ENCODE measurements at regions of chr6 and their contacts with region 1.

Region 1: DNA sequence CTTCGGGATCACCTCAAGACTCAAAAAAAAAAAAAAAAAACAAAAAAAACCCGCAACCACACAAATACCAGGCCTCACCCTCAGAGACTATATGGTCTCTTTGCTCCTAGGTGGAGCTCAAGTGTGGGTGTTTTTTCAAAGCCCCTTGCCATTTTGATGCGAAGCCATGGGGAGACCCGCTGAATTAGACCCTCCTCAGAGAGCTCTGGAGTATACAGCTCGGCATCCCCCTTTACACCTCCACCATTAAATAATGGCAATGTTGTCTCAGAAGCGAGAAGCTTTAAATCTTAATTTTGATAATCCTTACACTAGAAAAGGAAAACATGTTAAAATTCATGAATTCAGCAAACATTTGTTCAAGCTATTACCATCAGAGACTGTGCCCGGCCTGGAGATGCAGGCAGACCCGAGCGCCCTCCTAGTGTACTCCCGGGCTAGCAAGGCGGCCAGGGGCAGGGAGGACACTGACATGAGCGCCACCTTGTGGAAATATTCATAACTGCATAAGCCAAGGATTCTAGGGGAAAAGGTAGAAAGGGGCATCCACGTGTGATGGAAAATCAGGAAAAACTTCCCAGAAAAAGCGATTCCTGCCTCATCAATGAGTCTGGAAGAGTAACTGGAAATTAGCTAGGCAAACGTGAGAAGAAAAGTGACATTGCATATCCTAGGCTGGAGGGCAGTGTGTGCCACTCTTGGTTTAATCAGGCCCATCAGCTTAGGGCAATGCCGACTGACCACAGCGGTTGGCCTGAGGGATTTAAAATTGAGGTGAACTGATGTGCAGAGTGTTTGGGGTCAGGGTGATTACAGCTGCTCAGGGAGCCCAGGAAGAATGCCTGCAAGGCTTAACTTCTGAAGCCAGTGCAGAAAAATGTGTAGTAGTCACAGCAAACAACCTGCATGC is 72.5 kb downstream of the B3GAT2 start:
- DNase-seq: peak; percentile 52
- H3K4me3 ChIP-seq: no peak overlapping the region
- H3K27ac ChIP-seq: no peak overlapping the region
- H3K4me1 ChIP-seq: peaks cover 0 to 3% (median 0%) of the 10 kb centered on the region in 4 donors
- H3K27me3 ChIP-seq: no peaks in the 10 kb centered on the region
- CTCF ChIP-seq: peak; percentile 86 to 96 (median 90)
- EP300 ChIP-seq: no peak
- POLR2A ChIP-seq: no peak

Region 2: DNA sequence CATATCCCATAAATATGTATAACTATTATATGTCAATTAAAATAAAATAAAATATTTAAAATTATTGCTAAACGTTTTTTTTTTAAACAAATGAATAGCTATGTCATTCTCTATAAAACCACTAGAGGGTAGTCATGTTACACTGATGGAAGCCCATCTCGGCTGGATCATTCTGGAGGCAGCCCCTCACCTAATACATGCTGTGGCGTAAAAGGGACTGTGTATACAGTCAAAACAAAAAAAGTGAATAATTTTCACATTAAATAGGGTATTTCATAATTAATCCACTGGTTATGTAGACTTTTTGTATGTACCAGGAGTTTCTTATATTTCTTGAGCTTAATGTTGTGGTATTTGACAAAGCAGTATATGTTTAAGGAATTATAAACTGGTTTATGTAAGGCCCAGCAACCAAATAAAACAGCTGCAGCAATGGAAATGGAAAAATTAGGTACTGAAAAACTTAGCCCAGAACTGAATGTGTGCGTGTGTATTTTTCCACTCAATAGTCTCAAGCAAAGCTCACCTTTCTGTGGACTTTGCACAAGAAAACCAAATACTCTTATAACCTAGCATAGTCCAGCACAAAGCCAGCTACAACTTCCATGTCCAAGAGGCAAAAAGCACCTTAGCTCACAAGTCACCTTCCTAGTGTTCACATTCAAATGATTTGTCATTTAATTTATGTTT is 663.2 kb before region 1 on chr6:
- in situ Hi-C with region 1: loop called in 1 of 4 experiments (anchors 25 kb)
- intact Hi-C with region 1: no loop called
- DNase-seq: no peak
- H3K4me3 ChIP-seq: no peak overlapping the region
- H3K27ac ChIP-seq: peak overlapping the region in 2 of 4 donors; percentile 9 to 11
- H3K4me1 ChIP-seq: peaks cover 0 to 18% (median 7%) of the 10 kb centered on the region in 4 donors
- H3K27me3 ChIP-seq: no peaks in the 10 kb centered on the region
- CTCF ChIP-seq: peak; percentile 72 to 84 (median 79)
- EP300 ChIP-seq: no peak
- POLR2A ChIP-seq: no peak

Region 3: DNA sequence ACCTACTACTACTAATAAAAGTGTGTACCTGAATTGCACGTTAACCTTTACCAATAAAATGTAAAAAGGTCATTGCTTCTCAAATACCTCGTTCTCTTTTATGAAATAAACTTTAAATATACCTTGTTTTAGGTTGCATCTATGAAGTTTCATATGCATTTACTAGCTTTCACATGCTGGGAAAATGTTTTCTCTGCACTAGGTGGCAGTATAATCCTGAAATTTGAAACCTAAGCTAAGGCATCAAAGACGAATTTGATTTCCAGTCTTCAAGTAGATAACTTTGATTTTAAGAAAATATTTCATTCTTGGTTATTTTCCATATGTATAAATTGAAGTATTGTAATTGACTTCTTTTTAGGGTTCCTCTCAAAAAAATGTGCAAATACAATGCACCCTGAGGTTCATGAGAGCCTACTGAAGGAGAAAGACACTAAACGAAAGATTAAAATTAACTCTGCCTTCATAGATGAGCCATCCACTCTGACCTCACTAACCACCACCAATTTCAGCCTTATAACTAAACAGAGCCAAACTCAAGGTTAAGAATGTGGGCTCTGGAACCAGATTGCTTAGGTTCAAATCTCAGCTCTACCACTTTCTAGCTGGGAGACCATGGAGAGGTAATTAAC is 574.1 kb before region 1 on chr6:
- in situ Hi-C with region 1: loop called in 2 of 4 experiments (anchors 25 kb)
- intact Hi-C with region 1: no loop called
- DNase-seq: no peak
- H3K4me3 ChIP-seq: no peak overlapping the region
- H3K27ac ChIP-seq: no peak overlapping the region
- H3K4me1 ChIP-seq: peaks cover 0 to 7% (median 0%) of the 10 kb centered on the region in 4 donors
- H3K27me3 ChIP-seq: no peaks in the 10 kb centered on the region
- CTCF ChIP-seq: peak; percentile 47 to 63 (median 58)
- EP300 ChIP-seq: no peak
- POLR2A ChIP-seq: no peak

Region 4: GRCh38 chr6:70547313-70547712 is 337.0 kb before region 1 on chr6:
- in situ Hi-C with region 1: loop called in 2 of 4 experiments (anchors 25 kb)
- intact Hi-C with region 1: no loop called
- DNase-seq: no peak
- H3K4me3 ChIP-seq: no peak overlapping the region
- H3K27ac ChIP-seq: no peak overlapping the region
- H3K4me1 ChIP-seq: no peaks in the 10 kb centered on the region
- H3K27me3 ChIP-seq: no peaks in the 10 kb centered on the region
- CTCF ChIP-seq: peak in 1 of 5 experiments; percentile 13
- EP300 ChIP-seq: no peak
- POLR2A ChIP-seq: no peak

Region 5: DNA sequence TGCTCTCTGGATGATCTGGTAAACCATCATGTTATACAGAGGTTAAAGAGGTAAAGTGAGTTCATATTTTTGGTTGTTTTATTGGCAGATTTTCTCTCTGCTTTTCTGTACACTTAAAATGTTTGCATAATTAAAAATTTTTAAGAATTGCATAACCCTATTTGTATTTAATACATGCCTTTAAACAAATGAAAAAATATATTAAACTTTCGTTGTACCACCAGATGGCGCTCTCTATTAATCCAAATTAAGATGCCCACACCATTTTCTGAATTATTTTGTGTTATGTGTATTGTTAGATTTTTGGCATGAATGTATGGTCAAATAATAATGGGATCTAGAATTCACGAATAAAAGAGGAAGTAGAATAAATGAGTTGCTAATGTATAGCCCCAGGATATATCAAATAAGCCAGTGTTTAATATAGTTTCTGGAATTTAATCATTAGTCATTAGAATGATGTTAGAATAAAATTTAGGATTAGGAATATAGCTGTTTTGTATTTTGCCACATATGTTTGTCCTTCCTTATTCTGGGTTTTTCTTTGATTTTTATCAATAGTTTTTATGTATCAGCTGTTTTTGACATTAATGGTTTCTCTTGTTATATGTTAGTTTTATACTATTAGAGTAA is 177.7 kb before region 1 on chr6:
- in situ Hi-C with region 1: loop called (anchors 5 to 10 kb)
- intact Hi-C with region 1: loop called (anchors 5 kb)
- DNase-seq: no peak
- H3K4me3 ChIP-seq: no peak overlapping the region
- H3K27ac ChIP-seq: no peak overlapping the region
- H3K4me1 ChIP-seq: peaks cover 0 to 49% (median 17%) of the 10 kb centered on the region in 4 donors
- H3K27me3 ChIP-seq: no peaks in the 10 kb centered on the region
- CTCF ChIP-seq: peak; percentile 61 to 71 (median 65)
- EP300 ChIP-seq: no peak
- POLR2A ChIP-seq: no peak

Region 6: DNA sequence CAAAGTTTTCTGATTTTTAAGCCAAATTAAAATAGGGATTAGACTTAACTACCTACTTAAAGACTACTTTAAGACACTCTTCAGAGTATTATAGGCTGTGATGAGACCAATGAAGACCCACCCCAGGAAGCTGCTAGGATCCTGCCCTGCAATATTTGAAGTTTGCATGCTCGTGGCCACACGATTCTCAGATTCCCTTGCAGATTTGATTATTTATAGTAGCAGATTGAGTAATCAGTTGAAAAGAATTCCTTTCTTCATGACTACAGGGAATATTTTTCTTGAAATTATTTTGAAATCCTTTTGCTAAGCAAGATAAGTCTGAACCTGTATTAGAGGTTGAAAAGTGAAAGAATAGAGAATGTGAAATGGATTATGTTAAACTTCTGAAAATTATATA is 49.8 kb before region 1 on chr6:
- in situ Hi-C with region 1: no loop called
- intact Hi-C with region 1: no loop called
- DNase-seq: no peak
- H3K4me3 ChIP-seq: no peak overlapping the region
- H3K27ac ChIP-seq: no peak overlapping the region
- H3K4me1 ChIP-seq: peaks cover 0 to 3% (median 0%) of the 10 kb centered on the region in 4 donors
- H3K27me3 ChIP-seq: no peaks in the 10 kb centered on the region
- CTCF ChIP-seq: no peak
- EP300 ChIP-seq: no peak
- POLR2A ChIP-seq: no peak